GM12878 (cell line): ENCODE measurements at regions of chr3 and their contacts with region 1.

Region 1: DNA sequence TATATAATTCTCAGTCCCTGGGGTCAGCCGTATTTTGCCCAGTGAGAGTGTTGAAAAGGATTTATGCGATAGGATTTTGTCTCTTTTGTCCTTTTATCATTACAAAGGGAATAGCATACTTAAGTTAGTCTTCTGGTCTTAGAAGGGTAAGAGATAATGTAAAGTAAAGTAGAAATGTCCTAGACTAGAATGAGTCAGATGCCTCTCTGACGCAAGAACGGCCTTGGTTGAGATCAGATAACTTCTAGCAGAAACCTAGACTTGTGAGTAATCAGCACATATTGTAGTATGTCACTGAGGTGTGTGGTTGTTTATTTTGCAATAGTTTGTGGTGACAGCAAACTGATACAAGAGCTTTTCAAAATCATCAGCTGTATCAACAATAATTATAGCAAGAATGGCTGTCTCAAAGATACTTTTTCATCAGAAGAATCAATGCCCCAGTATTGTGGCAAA is 866.1 kb downstream of the NSUN3 start:
- DNase-seq: no peak
- ATAC-seq: no peak; the same call in none of the 3 replicates
- H3K4me3 ChIP-seq: no peak overlapping the region
- H3K27ac ChIP-seq: no peak overlapping the region
- H3K4me1 ChIP-seq: no peaks in the 10 kb centered on the region
- H3K27me3 ChIP-seq: no peaks in the 10 kb centered on the region
- CTCF ChIP-seq: no peak
- EP300 ChIP-seq: no peak
- POLR2A ChIP-seq: no peak
- RAD21 ChIP-seq: no peak

Region 2: GRCh38 chr3:94246171-94246570 is 682.8 kb before region 1 on chr3:
- CTCF ChIA-PET with region 1: no interaction called
- POLR2A ChIA-PET with region 1: no interaction called
- RAD21 ChIA-PET with region 1: no interaction called
- SMC1A ChIA-PET with region 1: no interaction called
- in situ Hi-C with region 1: no loop called
- intact Hi-C with region 1: no loop called
- DNase-seq: no peak
- ATAC-seq: no peak
- H3K4me3 ChIP-seq: no peak overlapping the region
- H3K27ac ChIP-seq: no peak overlapping the region
- H3K4me1 ChIP-seq: no peaks in the 10 kb centered on the region
- H3K27me3 ChIP-seq: no peaks in the 10 kb centered on the region
- CTCF ChIP-seq: no peak
- EP300 ChIP-seq: no peak
- POLR2A ChIP-seq: no peak
- RAD21 ChIP-seq: no peak

Region 3: GRCh38 chr3:94596887-94597566 is 331.9 kb before region 1 on chr3:
- CTCF ChIA-PET with region 1: no interaction called
- POLR2A ChIA-PET with region 1: no interaction called
- RAD21 ChIA-PET with region 1: no interaction called
- SMC1A ChIA-PET with region 1: no interaction called
- in situ Hi-C with region 1: no loop called
- intact Hi-C with region 1: no loop called
- DNase-seq: no peak
- ATAC-seq: peak; percentile 85
- H3K4me3 ChIP-seq: no peak overlapping the region
- H3K27ac ChIP-seq: no peak overlapping the region
- H3K4me1 ChIP-seq: no peaks in the 10 kb centered on the region
- H3K27me3 ChIP-seq: no peaks in the 10 kb centered on the region
- CTCF ChIP-seq: no peak
- EP300 ChIP-seq: peak in 1 of 2 experiments; percentile 73; a peak in 1 of 4 replicates
- POLR2A ChIP-seq: no peak
- RAD21 ChIP-seq: no peak

Region 4: GRCh38 chr3:94654096-94654495 is 274.8 kb before region 1 on chr3:
- CTCF ChIA-PET with region 1: no interaction called
- POLR2A ChIA-PET with region 1: no interaction called
- RAD21 ChIA-PET with region 1: no interaction called
- SMC1A ChIA-PET with region 1: no interaction called
- in situ Hi-C with region 1: no loop called
- intact Hi-C with region 1: loop called (anchors 5 kb)
- DNase-seq: no peak
- ATAC-seq: no peak
- H3K4me3 ChIP-seq: no peak overlapping the region
- H3K27ac ChIP-seq: no peak overlapping the region
- H3K4me1 ChIP-seq: no peaks in the 10 kb centered on the region
- H3K27me3 ChIP-seq: no peaks in the 10 kb centered on the region
- CTCF ChIP-seq: no peak
- EP300 ChIP-seq: no peak
- POLR2A ChIP-seq: no peak
- RAD21 ChIP-seq: no peak

Region 5: GRCh38 chr3:94904156-94904674 is 24.7 kb before region 1 on chr3:
- CTCF ChIA-PET with region 1: no interaction called
- POLR2A ChIA-PET with region 1: no interaction called
- RAD21 ChIA-PET with region 1: no interaction called
- SMC1A ChIA-PET with region 1: no interaction called
- in situ Hi-C with region 1: no loop called
- intact Hi-C with region 1: no loop called
- DNase-seq: no peak
- ATAC-seq: no peak
- H3K4me3 ChIP-seq: no peak overlapping the region
- H3K27ac ChIP-seq: no peak overlapping the region
- H3K4me1 ChIP-seq: no peaks in the 10 kb centered on the region
- H3K27me3 ChIP-seq: no peaks in the 10 kb centered on the region
- CTCF ChIP-seq: no peak
- EP300 ChIP-seq: no peak
- POLR2A ChIP-seq: no peak
- RAD21 ChIP-seq: no peak